Activated T-helper 2 cell treated with anti-CD3 and anti-CD28 coated beads, Interferon-gamma antibody, Interleukin-2, Interleukin-4, amounts not matched to agents 10 μg/mL and 5 μg/mL and 100 μg/mL, durations not matched to agents 14 hours and 24 hours and 36 hours (primary cell): ENCODE measurements at regions of chr13 and their contacts with region 1.

Region 1: GRCh38 chr13:73754727-73755292 is 379.4 kb downstream of the KLF12 start:
- DNase-seq: no peak
- H3K4me3 Mint-ChIP-seq: no peak overlapping the region
- H3K27ac Mint-ChIP-seq: no peak overlapping the region
- H3K4me1 Mint-ChIP-seq: peaks cover 7% of the 10 kb centered on the region
- H3K27me3 Mint-ChIP-seq: no peaks in the 10 kb centered on the region

Region 2: DNA sequence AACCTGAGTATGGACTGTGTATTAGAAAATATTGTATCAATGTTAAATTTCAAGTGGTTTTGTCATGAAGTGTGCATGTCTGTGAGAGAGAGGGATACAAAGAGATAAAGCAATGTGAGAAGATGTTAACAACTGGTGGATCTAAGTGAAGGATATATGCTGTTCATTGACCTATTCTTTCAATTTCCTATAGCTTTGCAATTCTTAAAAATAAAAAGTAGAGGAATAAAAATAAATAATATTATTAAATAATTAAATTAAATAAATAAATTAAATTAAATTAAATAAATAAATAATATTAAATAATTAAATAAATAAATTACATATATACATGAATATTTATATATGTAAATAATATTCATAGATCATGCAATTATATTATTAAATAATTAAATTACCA is 1756.6 kb before region 1 on chr13:
- intact Hi-C with region 1: no loop called
- DNase-seq: no peak
- H3K4me3 Mint-ChIP-seq: no peak overlapping the region
- H3K27ac Mint-ChIP-seq: no peak overlapping the region
- H3K4me1 Mint-ChIP-seq: no peaks in the 10 kb centered on the region
- H3K27me3 Mint-ChIP-seq: no peaks in the 10 kb centered on the region

Region 3: DNA sequence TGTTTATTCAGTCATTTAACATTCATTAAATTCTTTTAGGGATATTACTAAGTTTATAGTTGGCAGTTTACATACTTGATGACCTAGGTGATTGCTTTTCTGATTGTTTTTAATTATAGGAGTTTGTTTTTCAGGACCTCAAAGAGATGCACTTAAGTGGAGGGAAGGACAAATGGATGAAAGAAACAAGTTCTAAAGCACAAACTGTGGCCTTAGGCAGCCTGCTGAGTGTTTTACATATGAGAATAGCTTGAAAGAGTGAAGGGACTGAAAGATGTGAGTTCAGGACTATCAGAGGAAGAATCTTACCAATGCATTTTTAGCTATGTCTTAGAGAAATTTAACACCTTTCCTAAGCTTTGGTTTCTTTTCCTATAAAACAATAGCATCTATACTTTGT is 23.2 kb before region 1 on chr13:
- intact Hi-C with region 1: no loop called
- DNase-seq: no peak
- H3K4me3 Mint-ChIP-seq: no peak overlapping the region
- H3K27ac Mint-ChIP-seq: no peak overlapping the region
- H3K4me1 Mint-ChIP-seq: no peaks in the 10 kb centered on the region
- H3K27me3 Mint-ChIP-seq: no peaks in the 10 kb centered on the region

Region 4: DNA sequence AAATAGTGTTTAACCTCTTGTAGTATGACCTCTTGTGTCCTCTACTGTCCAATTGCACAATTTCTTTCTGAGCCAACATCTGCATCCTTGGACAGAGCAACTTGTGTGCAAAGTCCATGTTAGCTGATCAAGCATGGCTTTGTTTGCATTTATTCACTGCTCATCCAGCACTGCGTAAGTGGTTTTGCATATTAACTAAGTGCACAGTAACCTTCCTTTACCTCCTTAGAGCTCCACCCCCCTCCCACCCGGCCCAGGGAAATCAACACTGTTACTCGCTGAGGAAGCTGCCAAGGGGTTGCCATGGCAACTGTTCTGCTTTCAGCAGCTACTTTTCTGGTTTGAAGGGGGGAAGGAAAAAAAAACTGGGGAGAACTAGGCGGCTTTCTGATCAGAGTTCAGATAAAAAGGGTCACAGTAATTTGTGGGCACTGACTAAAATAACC is 532.9 kb after region 1 on chr13:
- intact Hi-C with region 1: loop called (anchors 2 kb)
- DNase-seq: peak; percentile 71
- H3K4me3 Mint-ChIP-seq: peak overlapping the region; percentile 15
- H3K27ac Mint-ChIP-seq: peak overlapping the region; percentile 33
- H3K4me1 Mint-ChIP-seq: peaks cover 33% of the 10 kb centered on the region
- H3K27me3 Mint-ChIP-seq: peaks cover 20% of the 10 kb centered on the region

Region 5: DNA sequence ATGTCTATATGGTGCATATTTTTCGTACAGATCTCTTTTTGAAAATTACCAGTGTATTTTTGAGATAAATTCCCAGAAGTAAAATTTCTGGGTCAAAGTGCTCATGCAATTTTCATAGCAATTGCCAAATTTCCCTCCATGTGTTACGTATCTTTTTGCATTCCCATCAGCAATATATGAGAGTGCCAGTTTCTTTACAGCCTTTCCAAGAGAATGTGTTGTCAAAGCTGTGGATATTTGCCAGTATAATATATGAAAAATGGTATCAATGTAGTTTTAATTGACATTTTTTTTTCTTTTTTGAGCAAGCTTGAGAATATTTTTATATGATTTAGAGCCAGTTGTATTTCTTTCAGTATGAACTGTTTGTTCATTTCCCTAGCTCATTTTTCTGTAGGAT is 778.4 kb after region 1 on chr13:
- intact Hi-C with region 1: no loop called
- DNase-seq: no peak
- H3K4me3 Mint-ChIP-seq: no peak overlapping the region
- H3K27ac Mint-ChIP-seq: no peak overlapping the region
- H3K4me1 Mint-ChIP-seq: no peaks in the 10 kb centered on the region
- H3K27me3 Mint-ChIP-seq: no peaks in the 10 kb centered on the region

Region 6: DNA sequence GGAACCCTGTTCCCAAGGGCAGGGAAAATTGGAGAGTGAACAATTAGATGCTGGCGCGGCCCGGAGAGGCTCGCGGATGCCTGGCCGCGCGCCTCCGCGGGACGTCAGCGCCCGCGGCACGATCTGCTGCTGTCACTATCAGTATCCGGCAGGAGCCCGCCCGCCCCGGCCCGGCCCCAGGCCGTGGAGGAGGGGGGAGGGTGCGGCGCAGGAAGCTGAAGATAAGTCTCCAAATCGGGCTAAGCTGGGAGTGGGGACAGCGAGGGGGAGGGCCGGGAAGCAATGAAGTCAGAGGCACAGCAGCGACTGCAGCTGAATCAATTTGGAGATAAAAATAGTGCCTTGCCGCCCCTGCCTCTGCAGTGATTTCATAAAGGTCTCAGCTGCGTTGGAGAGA is 820.9 kb after region 1 on chr13:
- intact Hi-C with region 1: no loop called
- DNase-seq: peak; percentile 22
- H3K4me3 Mint-ChIP-seq: peak overlapping the region; percentile 26
- H3K27ac Mint-ChIP-seq: no peak overlapping the region
- H3K4me1 Mint-ChIP-seq: no peaks in the 10 kb centered on the region
- H3K27me3 Mint-ChIP-seq: peaks cover 40% of the 10 kb centered on the region

Region 7: DNA sequence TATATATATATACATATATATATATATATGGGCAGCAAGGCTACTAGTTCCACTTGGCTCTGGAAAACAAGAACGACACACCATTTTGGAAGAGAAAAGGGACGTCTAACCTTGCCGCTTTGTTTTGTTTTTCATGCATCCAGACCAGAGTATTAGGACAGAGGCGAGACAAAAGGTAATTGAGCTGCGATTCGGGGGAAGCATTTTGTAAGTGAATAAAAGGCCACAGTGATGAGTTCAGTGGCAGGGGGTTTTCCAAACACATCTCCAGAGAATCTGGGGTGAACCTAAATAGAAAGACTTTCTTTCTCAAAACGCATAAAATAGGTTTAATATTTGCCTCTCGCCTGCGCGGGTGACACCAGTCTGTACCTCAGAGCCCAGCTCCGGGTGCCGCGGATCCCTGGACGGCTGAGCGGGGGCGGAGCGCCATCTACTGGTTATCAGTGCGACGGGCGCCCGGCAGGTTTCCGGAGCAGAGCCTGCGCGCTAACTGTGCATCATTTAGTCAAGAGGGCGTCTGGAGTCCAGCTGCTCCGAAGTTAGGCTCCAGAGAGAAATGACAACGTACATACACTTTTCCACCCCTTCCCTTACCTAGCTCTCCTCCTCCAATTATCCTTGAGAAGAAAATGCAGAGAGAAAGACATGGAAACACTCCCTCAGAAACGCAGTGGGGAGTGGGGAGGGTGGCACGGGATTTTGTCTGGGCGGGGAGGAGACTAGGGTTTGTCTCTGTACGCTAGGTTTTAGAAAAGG is 1464.8 kb after region 1 on chr13:
- intact Hi-C with region 1: loop called (anchors 10 kb)
- DNase-seq: peak; percentile 75
- H3K4me3 Mint-ChIP-seq: peak overlapping the region; percentile 49
- H3K27ac Mint-ChIP-seq: peak overlapping the region; percentile 34
- H3K4me1 Mint-ChIP-seq: peaks cover 6% of the 10 kb centered on the region
- H3K27me3 Mint-ChIP-seq: peaks cover 45% of the 10 kb centered on the region